Activated CD4-positive, alpha-beta T cell treated with anti-CD3 and anti-CD28 coated beads for 36 hours (primary cell): ENCODE measurements at regions of chr3 and their contacts with region 1.

Region 1: DNA sequence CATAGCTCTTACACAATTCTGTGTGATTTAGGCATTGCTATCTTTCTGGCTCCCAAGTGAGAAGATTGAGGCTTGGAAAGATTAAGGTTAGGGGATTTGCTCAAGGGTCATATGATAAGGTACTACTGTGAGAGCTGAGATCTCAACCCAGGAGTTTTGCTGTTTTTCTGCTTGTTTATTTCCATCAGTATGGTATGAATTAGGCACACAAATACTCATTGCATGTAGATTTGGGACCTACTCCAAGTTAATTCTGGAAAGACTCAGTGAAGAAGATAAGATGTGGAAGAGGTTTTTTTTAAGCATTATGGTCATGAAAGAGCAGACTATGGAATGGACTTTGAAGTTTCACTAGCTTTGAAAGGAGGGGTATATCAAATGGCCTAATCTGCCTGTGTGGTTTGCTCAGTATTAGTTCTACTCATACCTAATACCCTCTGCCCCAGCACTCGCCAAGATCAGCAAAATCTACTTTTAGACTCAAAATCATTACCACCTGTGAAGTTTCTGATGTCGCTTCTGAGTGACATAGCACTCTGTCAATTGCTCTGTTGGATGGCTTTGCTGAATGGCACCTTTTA is 12.5 kb downstream of the MBNL1 start:
- DNase-seq: no peak
- ATAC-seq: peak; percentile 27
- H3K4me3 Mint-ChIP-seq: peak overlapping the region; percentile 48
- H3K27ac Mint-ChIP-seq: peak overlapping the region; percentile 84
- H3K4me1 Mint-ChIP-seq: peaks cover 79% of the 10 kb centered on the region
- H3K27me3 Mint-ChIP-seq: no peaks in the 10 kb centered on the region

Region 2: DNA sequence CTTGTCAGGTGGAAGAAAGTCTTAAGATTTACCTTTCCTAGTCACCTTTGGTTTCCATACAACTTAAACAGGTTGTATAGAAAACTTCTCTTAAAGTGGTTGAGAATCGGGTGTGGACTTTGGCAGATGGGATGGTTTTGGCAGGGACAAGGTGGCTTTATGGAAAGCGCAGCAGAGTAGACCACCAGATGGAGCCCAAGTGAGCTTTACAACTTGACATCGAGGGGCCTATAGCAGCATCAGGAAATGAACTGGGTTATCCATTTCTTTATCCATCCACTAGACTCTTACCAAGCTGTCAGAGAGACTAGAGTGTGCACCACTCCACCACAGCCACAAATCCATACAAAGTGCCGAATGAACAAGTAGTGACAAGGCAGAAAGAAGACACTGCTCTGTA is 97.8 kb before region 1 on chr3:
- CTCF ChIA-PET with region 1: interaction called, 19 read pairs
- POLR2A ChIA-PET with region 1: no interaction called
- intact Hi-C with region 1: no loop called
- DNase-seq: peak; percentile 72
- ATAC-seq: peak; percentile 87
- H3K4me3 Mint-ChIP-seq: peak overlapping the region; percentile 6
- H3K27ac Mint-ChIP-seq: peak overlapping the region; percentile 71
- H3K4me1 Mint-ChIP-seq: peaks cover 67% of the 10 kb centered on the region
- H3K27me3 Mint-ChIP-seq: no peaks in the 10 kb centered on the region

Region 3: DNA sequence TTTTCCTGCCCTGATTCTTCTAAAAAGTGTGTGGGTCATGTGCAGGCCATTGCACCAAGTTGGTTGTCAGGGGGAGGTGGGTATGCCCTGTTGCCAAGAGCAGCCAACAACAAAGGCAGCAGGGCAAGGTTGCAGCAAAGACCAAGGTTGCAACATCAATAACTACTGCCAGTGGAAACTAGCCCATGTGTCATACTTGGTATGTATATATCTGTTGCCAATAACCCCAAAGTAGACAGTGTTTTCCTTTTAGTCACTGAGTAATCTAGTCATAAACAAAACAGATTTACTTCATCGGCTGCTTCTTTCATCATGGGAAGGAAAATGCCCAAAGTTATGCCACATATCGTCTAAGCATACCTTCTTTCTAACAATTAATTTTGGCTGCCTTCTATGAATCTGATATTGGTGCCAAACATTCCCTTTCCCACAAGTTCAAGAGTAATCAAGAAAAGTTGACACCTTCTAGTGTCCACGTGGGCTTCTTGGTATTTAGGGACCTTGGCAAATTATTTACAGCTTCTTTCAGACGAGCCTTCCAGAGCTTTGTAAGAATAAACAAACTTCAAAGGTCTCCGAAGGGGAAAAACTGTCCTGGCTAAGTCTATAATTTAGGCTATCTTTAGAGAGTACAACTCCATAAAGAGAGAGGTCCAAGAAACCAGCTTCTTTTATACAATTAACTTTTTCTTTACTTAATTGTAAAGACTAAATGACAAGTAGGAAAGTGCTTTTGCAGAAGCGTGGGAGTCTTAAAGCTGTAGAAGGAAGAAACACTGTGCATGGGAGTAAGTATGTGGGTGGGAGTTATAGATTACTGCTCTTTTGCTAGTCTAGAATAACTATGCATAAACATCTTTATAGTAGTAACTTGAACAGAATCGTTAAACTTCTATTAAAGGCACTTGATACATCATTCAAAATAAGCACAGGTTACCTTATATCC is 22.5 kb before region 1 on chr3:
- CTCF ChIA-PET with region 1: interaction called, 14 read pairs
- POLR2A ChIA-PET with region 1: interaction called, 12 read pairs
- intact Hi-C with region 1: no loop called
- DNase-seq: peak; percentile 82
- ATAC-seq: peak; percentile 81
- H3K4me3 Mint-ChIP-seq: peak overlapping the region; percentile 61
- H3K27ac Mint-ChIP-seq: peak overlapping the region; percentile 91
- H3K4me1 Mint-ChIP-seq: peaks cover 90% of the 10 kb centered on the region
- H3K27me3 Mint-ChIP-seq: no peaks in the 10 kb centered on the region

Region 4: GRCh38 chr3:152291649-152292066 is 10.4 kb after region 1 on chr3:
- CTCF ChIA-PET with region 1: interaction called, 14 read pairs
- POLR2A ChIA-PET with region 1: interaction called, 4 read pairs
- intact Hi-C with region 1: no loop called
- DNase-seq: no peak
- ATAC-seq: peak; percentile 64
- H3K4me3 Mint-ChIP-seq: peak overlapping the region; percentile 55
- H3K27ac Mint-ChIP-seq: peak overlapping the region; percentile 68
- H3K4me1 Mint-ChIP-seq: peaks cover 73% of the 10 kb centered on the region
- H3K27me3 Mint-ChIP-seq: no peaks in the 10 kb centered on the region

Region 5: GRCh38 chr3:152298393-152299242 is 17.4 kb after region 1 on chr3:
- CTCF ChIA-PET with region 1: interaction called, 6 read pairs
- POLR2A ChIA-PET with region 1: interaction called, 3 read pairs
- intact Hi-C with region 1: loop called in 1 of 2 experiments (anchors 2 kb)
- DNase-seq: peak; percentile 70
- ATAC-seq: peak; percentile 87
- H3K4me3 Mint-ChIP-seq: peak overlapping the region; percentile 69
- H3K27ac Mint-ChIP-seq: peak overlapping the region; percentile 79
- H3K4me1 Mint-ChIP-seq: peaks cover 75% of the 10 kb centered on the region
- H3K27me3 Mint-ChIP-seq: no peaks in the 10 kb centered on the region

Region 6: GRCh38 chr3:152309535-152310307 is 28.5 kb after region 1 on chr3:
- CTCF ChIA-PET with region 1: interaction called, 12 read pairs
- POLR2A ChIA-PET with region 1: interaction called, 5 read pairs
- intact Hi-C with region 1: no loop called
- DNase-seq: no peak
- ATAC-seq: peak; percentile 94
- H3K4me3 Mint-ChIP-seq: no peak overlapping the region
- H3K27ac Mint-ChIP-seq: peak overlapping the region; percentile 6
- H3K4me1 Mint-ChIP-seq: peaks cover 74% of the 10 kb centered on the region
- H3K27me3 Mint-ChIP-seq: no peaks in the 10 kb centered on the region

Region 7: GRCh38 chr3:152444029-152444641 is 162.9 kb after region 1 on chr3:
- CTCF ChIA-PET with region 1: interaction called, 10 read pairs
- POLR2A ChIA-PET with region 1: no interaction called
- intact Hi-C with region 1: no loop called
- DNase-seq: no peak
- ATAC-seq: no peak
- H3K4me3 Mint-ChIP-seq: no peak overlapping the region
- H3K27ac Mint-ChIP-seq: peak overlapping the region; percentile 43
- H3K4me1 Mint-ChIP-seq: peaks cover 64% of the 10 kb centered on the region
- H3K27me3 Mint-ChIP-seq: no peaks in the 10 kb centered on the region